Left cardiac atrium (tissue), 4 donors: ENCODE measurements at regions of chr6 and their contacts with region 1.

Region 1: GRCh38 chr6:138001750-138002349 is 105.4 kb downstream of the PERP start:
- DNase-seq: peak; percentile 56
- ATAC-seq: peak; percentile 41 to 42

Region 2: DNA sequence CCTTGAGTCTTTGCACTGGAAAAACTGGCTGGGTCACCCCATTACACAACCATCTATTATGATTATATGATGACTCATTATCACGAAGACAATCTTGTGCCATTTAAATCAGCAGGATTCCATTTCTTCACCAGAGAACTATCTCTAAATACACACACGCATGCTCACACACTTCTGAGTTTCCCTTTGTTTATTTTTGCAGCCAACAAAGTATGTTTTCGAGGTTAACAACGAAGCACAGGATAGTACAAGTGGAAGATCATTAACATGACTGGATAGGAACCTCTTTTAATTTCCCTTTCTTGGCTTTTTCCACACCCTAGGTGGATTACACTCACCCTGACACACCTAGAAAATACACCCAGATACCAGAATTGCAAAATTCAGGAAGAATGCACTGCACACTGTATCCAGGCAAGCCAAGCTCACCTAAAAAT is 86.5 kb after region 1 on chr6:
- intact Hi-C with region 1: no loop called
- DNase-seq: no peak
- ATAC-seq: peak in 1 of 2 donors; percentile 79

Region 3: GRCh38 chr6:138109042-138109997 is 107.5 kb after region 1 on chr6:
- intact Hi-C with region 1: loop called (anchors 1 to 5 kb)
- DNase-seq: peak; percentile 58
- ATAC-seq: no peak

Region 4: GRCh38 chr6:138287144-138287955 is 285.5 kb after region 1 on chr6:
- intact Hi-C with region 1: loop called in 1 of 2 experiments (anchors 5 kb)
- DNase-seq: no peak
- ATAC-seq: peak; percentile 38 to 47

Region 5: DNA sequence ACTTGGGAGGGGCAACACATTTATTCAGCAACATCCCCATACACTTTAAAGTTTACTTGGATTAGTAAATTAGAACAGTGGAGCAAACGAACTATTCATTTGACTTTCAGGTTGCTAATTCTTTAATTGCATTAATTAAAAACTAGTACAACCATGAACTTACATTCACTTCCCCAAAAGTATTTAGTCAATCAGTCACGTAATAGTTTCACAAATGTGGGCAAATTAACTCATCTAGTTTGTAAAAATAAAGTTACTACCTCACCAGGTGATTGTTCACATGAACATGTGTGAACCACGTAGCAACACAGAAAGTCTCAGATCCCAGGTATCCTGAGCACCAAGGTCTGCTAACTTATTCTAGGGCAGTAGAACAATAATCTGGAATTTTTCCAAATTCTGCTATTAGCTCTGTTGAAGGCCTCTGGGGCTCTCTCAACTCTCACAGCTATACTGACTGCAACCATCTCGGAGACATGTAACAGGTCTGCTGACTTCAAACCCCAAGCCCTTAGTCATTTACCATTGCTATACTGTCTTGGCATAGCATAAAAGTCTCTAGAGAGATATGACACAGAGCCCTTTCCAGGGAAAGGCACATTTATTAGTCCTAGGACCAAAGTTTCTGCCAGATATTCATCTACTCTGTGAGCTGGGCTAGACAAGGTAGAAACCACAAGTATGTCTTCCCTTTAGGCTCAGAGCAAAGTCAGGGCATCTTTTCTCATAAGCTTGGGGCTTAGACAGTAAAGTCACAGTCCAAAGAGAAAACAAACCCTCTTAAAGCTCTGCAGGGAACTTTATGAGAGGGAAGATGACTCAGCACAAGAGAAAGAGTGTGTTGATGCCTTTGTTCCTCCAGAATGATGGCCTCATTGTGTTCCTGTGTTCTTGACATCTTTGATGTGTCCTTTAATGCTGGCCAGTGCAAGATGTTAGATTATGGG is 720.8 kb after region 1 on chr6:
- intact Hi-C with region 1: no loop called
- DNase-seq: no peak
- ATAC-seq: peak in 1 of 2 donors; percentile 21